ENCODE measurements at regions of chr5 and their contacts with region 1.

Region 1: DNA sequence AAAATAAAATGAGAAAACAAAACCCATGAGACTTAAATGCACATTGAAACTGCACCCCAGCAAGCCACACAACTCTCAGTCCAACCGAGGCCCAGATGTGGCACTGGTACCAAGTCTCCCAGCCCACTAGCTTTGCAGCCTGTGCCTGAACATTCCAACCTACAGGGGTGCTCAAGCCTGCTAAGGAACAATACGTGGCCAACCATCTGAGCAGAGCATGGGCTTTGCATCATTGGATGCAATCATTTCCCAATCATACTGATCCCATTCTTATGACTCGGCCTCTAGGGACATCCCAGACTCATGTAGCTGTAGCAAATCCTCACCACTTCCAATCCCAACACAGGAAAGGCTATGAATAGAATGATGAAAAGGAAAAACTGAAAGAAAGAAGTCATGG is 297.2 kb downstream of the SPOCK1 start:
- DNase-seq: peak; percentile 70
- H3K4me3 ChIP-seq: no peak overlapping the region
- CTCF ChIP-seq: peak; percentile 63

Region 2: DNA sequence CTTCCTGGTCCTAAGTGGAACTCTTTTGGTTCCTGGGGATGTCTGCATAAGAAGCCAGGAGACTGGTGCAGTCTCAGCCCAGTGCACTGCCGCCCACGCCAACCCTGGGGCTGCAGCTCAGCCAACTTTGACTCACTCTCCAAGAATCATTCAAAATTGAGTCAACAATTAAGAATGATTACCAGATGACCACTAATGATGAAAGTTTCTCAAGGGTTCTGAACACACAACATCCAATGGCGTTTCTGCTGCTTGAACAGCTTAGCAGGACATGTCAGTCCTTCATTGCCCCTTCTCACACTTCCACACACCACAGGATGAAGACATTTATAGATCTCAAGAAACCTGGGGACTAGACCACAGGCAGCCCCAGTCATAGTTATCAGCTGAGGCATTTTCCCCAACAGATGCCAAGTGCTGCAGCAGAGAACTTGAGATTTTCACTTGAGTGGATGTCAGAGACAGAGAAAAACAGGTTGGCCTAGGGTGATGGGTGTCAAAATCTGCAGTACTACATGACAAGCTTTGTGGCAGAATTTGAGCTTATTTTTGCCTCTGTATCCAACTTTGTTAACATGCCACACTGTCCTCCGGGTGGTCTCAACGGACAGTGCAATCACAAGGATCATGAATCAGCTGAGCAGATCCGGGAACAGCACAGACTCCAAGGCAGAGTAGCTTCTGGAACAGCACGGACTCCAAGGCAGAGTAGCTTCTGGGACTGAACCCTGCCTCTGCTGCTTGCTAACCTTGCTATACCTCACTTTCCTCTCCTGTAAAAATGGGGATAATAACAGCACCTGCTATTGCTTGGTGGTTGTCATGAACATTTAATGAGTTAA is 58.9 kb before region 1 on chr5:
- CTCF ChIA-PET with region 1: no interaction called
- POLR2A ChIA-PET with region 1: no interaction called
- DNase-seq: peak; percentile 92
- H3K4me3 ChIP-seq: peak overlapping the region; percentile 15; the same call in 1 of the 2 replicates
- CTCF ChIP-seq: no peak

Region 3: GRCh38 chr5:137186759-137187461 is 15.0 kb before region 1 on chr5:
- CTCF ChIA-PET with region 1: interaction called, 20 read pairs
- POLR2A ChIA-PET with region 1: interaction called, 4 read pairs
- DNase-seq: peak; percentile 64
- H3K4me3 ChIP-seq: no peak overlapping the region
- CTCF ChIP-seq: no peak